Mammary epithelial cell (primary cell): ENCODE measurements at regions of chr1 and their contacts with region 1.

Region 1: GRCh38 chr1:115275212-115275611 is 62.8 kb downstream of the NGF start:
- DNase-seq: no peak
- H3K4me3 ChIP-seq: no peak overlapping the region
- H3K27ac ChIP-seq: no peak overlapping the region
- H3K4me1 ChIP-seq: no peaks in the 10 kb centered on the region
- H3K27me3 ChIP-seq: no peaks in the 10 kb centered on the region
- CTCF ChIP-seq: peak; percentile 45 to 72

Region 2: GRCh38 chr1:115337633-115338456 is 62.6 kb after region 1 on chr1 and contains the start of gene NGF:
- CTCF ChIA-PET with region 1: no interaction called
- dilution Hi-C with region 1: no loop called
- in situ Hi-C with region 1: no loop called
- intact Hi-C with region 1: loop called (anchors 10 kb)
- DNase-seq: peak; percentile 31
- H3K4me3 ChIP-seq: peak within 1 kb of the TSS; percentile 35 to 48 (median 47)
- H3K27ac ChIP-seq: no peak within 1 kb of the TSS
- H3K4me1 ChIP-seq: peaks cover 9% of the 10 kb centered on the region
- H3K27me3 ChIP-seq: no peaks in the 10 kb centered on the region
- CTCF ChIP-seq: no peak
- total RNA-seq, gene NGF: 0.17 to 1.3 TPM

Region 3: GRCh38 chr1:115506926-115507589 is 231.8 kb after region 1 on chr1:
- CTCF ChIA-PET with region 1: no interaction called
- dilution Hi-C with region 1: no loop called
- in situ Hi-C with region 1: no loop called
- intact Hi-C with region 1: loop called (anchors 2 kb)
- DNase-seq: no peak
- H3K4me3 ChIP-seq: no peak overlapping the region
- H3K27ac ChIP-seq: no peak overlapping the region
- H3K4me1 ChIP-seq: peaks cover 8% of the 10 kb centered on the region
- H3K27me3 ChIP-seq: no peaks in the 10 kb centered on the region
- CTCF ChIP-seq: peak; percentile 25 to 47